Aorta (tissue), 5 donors: ENCODE measurements at regions of chr6 and their contacts with region 1.

Region 1: DNA sequence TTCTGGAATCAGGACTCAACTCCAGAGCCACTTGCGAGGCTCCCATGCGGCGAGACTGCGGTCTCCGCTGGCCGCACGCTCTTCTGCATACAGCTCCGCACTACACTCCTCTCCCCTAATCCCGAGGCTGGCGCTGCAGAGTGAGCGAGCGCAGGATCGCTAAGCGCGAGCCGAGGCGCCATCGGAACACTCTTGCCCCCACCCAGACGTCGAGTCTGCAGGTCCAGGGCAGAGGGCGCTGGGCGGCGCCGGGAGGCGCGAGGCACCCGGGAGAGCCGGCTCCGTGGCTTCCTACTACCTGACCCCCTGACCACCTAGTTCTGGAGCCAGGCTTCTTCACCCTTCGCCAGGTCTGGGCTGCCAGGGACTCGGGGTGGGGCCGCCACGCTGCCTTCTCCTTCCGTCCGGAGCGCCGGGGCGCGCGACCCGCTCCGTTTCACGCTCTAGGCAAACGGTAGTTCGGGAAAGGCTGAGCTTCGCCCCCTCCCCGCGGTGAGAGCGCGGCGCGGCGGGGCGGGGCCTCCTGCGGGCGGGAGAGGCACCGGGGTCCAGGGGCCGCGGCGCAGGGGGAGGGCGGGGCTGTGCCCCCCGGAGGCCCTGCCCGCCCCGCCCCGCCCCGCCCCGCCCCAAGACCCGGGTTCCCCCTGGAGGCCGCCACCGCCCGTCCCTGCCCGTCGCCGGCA is 5.4 kb upstream of the TUBB2A start:
- DNase-seq: peak; percentile 81 to 89
- ATAC-seq: peak; percentile 82
- H3K4me3 ChIP-seq: peak overlapping the region; percentile 3 to 50
- H3K27ac ChIP-seq: peak overlapping the region; percentile 10 to 42
- H3K4me1 ChIP-seq: no peaks in the 10 kb centered on the region
- H3K27me3 ChIP-seq: no peaks in the 10 kb centered on the region

Region 2: GRCh38 chr6:3231247-3232016 is 68.7 kb after region 1 on chr6:
- intact Hi-C with region 1: loop called (anchors 5 kb)
- DNase-seq: peak in 1 of 2 donors; percentile 75
- ATAC-seq: peak; percentile 79
- H3K4me3 ChIP-seq: peak overlapping the region; percentile 9 to 29
- H3K27ac ChIP-seq: no peak overlapping the region
- H3K4me1 ChIP-seq: no peaks in the 10 kb centered on the region
- H3K27me3 ChIP-seq: peaks cover 0 to 2% of the 10 kb centered on the region in 2 donors

Region 3: DNA sequence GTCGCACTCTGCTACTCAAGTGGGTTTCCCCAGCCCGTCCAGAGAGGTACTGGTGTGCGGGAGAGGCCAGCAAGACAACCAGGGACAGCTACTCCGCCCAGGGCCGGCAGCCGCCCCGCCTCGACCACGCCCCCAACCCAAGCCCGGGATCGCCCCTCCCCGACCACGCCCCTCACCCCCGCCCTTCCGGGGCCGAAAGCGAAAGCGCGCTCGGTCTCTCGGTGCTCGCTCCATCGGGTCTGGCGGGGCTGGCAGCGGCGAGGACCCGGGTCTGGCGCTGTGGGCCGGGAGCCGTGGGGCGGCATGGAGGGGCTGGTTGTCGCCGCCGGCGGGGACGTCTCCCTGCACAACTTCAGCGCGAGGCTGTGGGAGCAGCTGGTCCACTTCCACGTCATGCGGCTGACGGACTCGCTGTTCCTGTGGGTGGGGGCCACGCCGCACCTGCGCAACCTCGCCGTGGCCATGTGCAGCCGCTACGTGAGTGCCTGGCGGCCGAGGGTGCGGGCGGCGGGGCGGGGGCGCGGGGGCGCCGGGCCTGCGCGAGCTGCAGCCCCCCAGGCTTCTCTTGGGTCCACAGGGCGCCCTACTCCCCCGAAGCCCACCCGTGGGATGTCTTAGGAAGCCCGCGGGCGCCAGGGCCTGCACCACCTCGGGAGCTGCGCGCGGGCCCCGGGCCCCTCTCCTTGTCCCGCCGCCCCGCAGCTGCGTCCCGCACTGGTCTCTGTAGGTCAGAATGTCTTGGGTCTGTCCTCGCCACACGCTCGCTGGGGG is 96.2 kb after region 1 on chr6 and contains the start of gene PSMG4:
- intact Hi-C with region 1: loop called in 1 of 2 experiments (anchors 2 kb)
- DNase-seq: peak; percentile 96 to 100
- ATAC-seq: peak; percentile 98
- H3K4me3 ChIP-seq: peak within 1 kb of the TSS; percentile 65 to 95
- H3K27ac ChIP-seq: peak within 1 kb of the TSS in 1 of 2 donors; percentile 8
- H3K4me1 ChIP-seq: no peaks in the 10 kb centered on the region
- H3K27me3 ChIP-seq: no peaks in the 10 kb centered on the region
- total RNA-seq, gene PSMG4: 12.0 to 24.3 TPM

Region 4: GRCh38 chr6:3294921-3295871 is 132.5 kb after region 1 on chr6:
- intact Hi-C with region 1: no loop called
- DNase-seq: peak in 1 of 2 donors; percentile 63
- ATAC-seq: no peak
- H3K4me3 ChIP-seq: no peak overlapping the region
- H3K27ac ChIP-seq: no peak overlapping the region
- H3K4me1 ChIP-seq: no peaks in the 10 kb centered on the region
- H3K27me3 ChIP-seq: no peaks in the 10 kb centered on the region

Region 5: GRCh38 chr6:3899970-3900439 is 737.3 kb after region 1 on chr6:
- intact Hi-C with region 1: no loop called
- DNase-seq: no peak
- ATAC-seq: no peak
- H3K4me3 ChIP-seq: no peak overlapping the region
- H3K27ac ChIP-seq: no peak overlapping the region
- H3K4me1 ChIP-seq: peaks cover 2 to 4% of the 10 kb centered on the region in 2 donors
- H3K27me3 ChIP-seq: no peaks in the 10 kb centered on the region